Heart right ventricle (tissue), 16 donors: ENCODE measurements at regions of chr20 and their contacts with region 1.

Region 1: DNA sequence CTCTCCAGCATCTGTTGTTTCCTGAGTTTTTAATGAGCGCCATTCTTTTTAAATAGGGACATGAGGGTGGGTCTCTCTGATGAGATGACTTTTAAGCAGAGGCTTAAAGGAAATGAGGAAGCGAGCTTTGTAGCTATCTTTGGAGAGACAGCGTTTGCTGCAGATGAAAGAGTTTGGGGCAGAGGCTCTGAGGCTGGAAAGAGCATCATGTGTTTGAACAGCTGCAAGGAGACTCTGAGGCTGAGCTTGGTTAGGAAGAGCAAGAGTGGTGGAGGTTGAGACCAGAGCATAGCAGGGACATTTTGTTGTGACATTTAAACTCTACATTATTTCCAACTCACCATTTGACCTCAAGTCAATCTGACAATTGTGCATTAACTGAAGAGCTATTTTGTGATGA is 38.3 kb upstream of the TMX4 start:
- DNase-seq: no peak
- ATAC-seq: no peak
- H3K4me3 ChIP-seq: no peak overlapping the region
- H3K27ac ChIP-seq: no peak overlapping the region
- H3K4me1 ChIP-seq: no peaks in the 10 kb centered on the region
- H3K27me3 ChIP-seq: no peaks in the 10 kb centered on the region
- CTCF ChIP-seq: no peak

Region 2: DNA sequence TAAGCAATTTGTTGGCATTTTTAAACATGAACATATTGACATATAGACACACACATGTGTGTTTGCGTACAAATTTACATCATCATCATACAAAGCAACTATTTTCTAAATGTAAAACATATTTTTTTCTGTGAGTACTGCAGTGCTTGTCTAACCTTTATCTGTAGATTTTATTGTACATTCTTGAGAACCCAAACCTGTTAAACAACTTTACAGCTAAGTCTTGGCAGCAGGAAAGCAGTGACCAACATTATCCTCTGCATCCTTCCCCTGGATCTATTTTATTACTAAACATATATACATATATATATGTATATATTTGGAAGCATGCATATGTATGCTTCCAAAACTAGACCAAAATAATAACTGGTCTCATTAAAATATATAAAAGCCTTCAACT is 63.8 kb after region 1 on chr20:
- intact Hi-C with region 1: loop called in 2 of 10 experiments (anchors 2 to 10 kb)
- DNase-seq: no peak
- ATAC-seq: no peak
- H3K4me3 ChIP-seq: no peak overlapping the region
- H3K27ac ChIP-seq: no peak overlapping the region
- H3K4me1 ChIP-seq: peaks cover 0 to 5% (median 0%) of the 10 kb centered on the region in 9 donors
- H3K27me3 ChIP-seq: peaks cover 0 to 3% (median 0%) of the 10 kb centered on the region in 7 donors
- CTCF ChIP-seq: no peak

Region 3: DNA sequence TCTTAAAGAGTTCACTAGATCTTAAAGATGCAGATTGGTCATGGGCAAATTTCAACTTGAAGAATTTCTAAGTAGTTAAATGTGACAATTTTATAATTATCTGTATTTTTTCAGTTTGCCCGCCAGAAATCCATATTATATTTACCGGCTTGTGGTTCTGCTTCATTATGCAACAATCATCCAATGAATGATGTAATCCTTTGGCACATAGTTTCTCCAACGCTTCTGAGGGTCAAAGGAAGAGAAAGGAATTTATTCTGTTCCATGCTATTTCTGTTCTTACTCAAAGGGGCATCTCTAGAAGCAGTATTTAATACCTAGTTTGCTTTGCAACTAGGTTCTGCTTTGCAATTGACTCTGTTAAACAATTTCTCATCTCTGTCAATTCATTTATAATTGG is 651.8 kb after region 1 on chr20:
- intact Hi-C with region 1: loop called in 1 of 10 experiments (anchors 1 kb)
- DNase-seq: no peak
- ATAC-seq: no peak
- H3K4me3 ChIP-seq: no peak overlapping the region
- H3K27ac ChIP-seq: no peak overlapping the region
- H3K4me1 ChIP-seq: peaks cover 0 to 10% (median 0%) of the 10 kb centered on the region in 9 donors
- H3K27me3 ChIP-seq: no peaks in the 10 kb centered on the region
- CTCF ChIP-seq: no peak

Region 4: GRCh38 chr20:8805737-8806442 is 748.0 kb after region 1 on chr20:
- intact Hi-C with region 1: loop called in 1 of 10 experiments (anchors 5 kb)
- DNase-seq: no peak
- ATAC-seq: no peak
- H3K4me3 ChIP-seq: no peak overlapping the region
- H3K27ac ChIP-seq: no peak overlapping the region
- H3K4me1 ChIP-seq: peaks cover 0 to 26% (median 13%) of the 10 kb centered on the region in 9 donors
- H3K27me3 ChIP-seq: no peaks in the 10 kb centered on the region
- CTCF ChIP-seq: no peak